ENCODE measurements at regions of chr3 and their contacts with region 1.

Region 1: DNA sequence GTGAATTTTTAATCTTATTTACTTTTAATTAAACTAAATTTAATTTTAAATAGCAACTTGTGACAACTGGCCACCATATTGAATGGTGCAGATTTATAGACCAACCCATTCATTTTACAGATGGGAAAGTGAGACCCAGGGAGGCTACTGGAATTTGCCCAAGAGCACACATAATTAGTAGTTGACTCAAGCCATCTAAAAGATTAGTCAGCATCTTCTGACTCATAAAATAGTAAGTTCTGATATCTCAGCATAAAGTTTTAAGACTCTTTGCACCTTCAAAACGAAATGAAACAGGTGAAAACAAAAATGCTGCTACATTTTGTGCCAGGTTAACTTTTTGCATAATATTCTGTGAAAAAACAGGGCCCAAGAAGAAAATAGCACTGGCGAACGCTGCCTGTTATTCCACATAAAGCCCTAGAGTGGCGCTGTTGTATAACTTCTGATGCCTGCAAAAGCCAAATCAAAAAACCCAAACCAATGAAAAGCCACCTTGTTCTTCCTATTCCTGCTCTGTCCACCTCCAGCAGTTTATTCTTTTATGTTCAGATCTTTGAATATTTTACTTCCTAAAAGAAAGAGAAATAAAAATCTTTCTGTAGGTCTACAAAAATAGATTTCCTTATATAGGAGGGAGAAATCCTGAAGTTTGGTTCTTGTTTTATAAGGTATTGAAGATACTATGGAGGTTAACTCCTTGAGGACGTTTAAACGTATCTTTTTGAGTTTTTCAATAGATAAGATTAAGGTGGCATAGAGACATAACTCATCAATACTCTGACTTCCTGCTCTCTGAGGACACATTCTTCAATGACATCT is 62.8 kb downstream of the OTOL1 start:
- DNase-seq: peak; percentile 50
- H3K4me3 Mint-ChIP-seq: no peak overlapping the region
- H3K27ac Mint-ChIP-seq: no peak overlapping the region
- H3K4me1 Mint-ChIP-seq: peaks cover 9% of the 10 kb centered on the region
- H3K27me3 Mint-ChIP-seq: no peaks in the 10 kb centered on the region
- CTCF ChIP-seq: peak; percentile 95

Region 2: DNA sequence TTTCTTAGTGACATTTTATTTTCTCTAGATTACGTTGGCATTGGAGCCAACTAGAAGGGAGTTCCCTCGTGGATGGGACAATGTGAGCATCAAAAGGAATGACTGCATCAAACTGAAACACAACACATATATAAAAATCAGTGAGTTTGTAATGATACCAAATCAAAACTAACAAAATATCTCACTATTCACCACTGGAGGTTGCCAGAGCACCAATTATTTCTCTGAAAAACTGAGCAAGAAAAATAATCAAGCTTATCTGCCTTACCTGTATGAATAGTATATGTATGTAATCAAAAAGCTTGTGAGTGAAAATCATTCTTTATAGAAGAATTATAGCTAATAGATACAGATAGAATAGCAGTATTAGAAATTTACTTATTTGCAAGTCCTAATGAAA is 109.6 kb before region 1 on chr3:
- CTCF ChIA-PET with region 1: no interaction called
- intact Hi-C with region 1: loop called (anchors 5 kb)
- DNase-seq: no peak
- H3K4me3 Mint-ChIP-seq: no peak overlapping the region
- H3K27ac Mint-ChIP-seq: no peak overlapping the region
- H3K4me1 Mint-ChIP-seq: peaks cover 6% of the 10 kb centered on the region
- H3K27me3 Mint-ChIP-seq: no peaks in the 10 kb centered on the region
- CTCF ChIP-seq: peak; percentile 20

Region 3: GRCh38 chr3:161700998-161701397 is 141.6 kb after region 1 on chr3:
- CTCF ChIA-PET with region 1: interaction called, 6 read pairs
- intact Hi-C with region 1: loop called (anchors 1 kb)
- DNase-seq: peak; percentile 63
- H3K4me3 Mint-ChIP-seq: no peak overlapping the region
- H3K27ac Mint-ChIP-seq: no peak overlapping the region
- H3K4me1 Mint-ChIP-seq: peaks cover 6% of the 10 kb centered on the region
- H3K27me3 Mint-ChIP-seq: no peaks in the 10 kb centered on the region
- CTCF ChIP-seq: no peak

Region 4: DNA sequence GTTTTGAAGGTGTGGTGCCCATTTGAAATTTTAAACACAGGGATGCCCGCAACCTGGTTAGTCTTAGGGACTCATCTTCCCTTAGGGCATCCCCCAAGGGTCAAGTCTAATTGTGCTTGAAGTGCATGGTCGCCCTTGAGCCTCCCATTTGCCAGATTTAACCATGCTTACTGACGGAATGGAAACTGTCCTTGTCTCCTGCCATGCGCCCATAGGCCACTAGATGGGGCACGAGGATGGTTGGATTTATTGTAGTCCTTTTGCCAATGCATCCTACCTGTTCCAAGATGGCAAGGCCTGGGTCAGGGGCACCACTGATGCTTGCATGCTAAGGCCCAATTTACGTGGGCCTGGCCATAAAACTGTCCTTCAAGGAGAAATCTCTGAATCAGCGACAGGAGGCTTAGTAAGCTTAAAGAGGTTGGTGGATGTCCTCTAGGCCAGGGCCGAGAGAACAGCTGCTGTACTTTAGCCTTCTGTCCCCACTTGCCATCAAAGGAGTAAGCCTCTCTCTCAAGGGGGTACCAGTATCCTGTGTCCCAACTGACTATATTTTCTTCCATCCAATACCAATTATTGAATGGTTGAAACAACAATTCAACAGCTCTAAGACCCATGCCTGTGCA is 292.7 kb after region 1 on chr3:
- CTCF ChIA-PET with region 1: no interaction called
- intact Hi-C with region 1: loop called (anchors 1 kb)
- DNase-seq: peak; percentile 87
- H3K4me3 Mint-ChIP-seq: no peak overlapping the region
- H3K27ac Mint-ChIP-seq: no peak overlapping the region
- H3K4me1 Mint-ChIP-seq: peaks cover 21% of the 10 kb centered on the region
- H3K27me3 Mint-ChIP-seq: no peaks in the 10 kb centered on the region
- CTCF ChIP-seq: peak; percentile 100

Region 5: DNA sequence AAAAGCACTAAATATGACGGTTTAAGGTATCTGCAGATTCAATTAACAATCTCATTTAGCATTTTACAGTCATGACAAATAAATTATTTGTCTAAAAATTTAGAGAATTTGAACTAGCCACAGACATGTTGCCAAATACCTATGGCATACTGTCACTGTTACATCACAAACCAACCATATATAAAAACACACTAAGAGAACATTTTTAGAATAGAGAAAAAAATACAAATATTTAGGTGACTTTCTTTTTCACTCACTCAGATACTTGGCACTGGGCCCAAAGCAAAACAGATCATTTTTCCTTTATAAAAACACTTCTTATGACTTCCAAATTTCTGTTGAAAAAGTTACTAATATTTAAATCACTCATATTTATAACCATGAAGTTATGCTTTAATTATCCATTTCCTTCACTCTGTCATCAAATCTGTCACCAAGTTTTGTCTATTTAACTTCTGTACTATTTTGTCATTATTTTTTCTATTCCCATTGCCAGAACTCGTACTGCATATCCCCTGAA is 581.9 kb after region 1 on chr3:
- CTCF ChIA-PET with region 1: no interaction called
- intact Hi-C with region 1: loop called (anchors 10 kb)
- DNase-seq: peak; percentile 19
- H3K4me3 Mint-ChIP-seq: no peak overlapping the region
- H3K27ac Mint-ChIP-seq: no peak overlapping the region
- H3K4me1 Mint-ChIP-seq: peaks cover 10% of the 10 kb centered on the region
- H3K27me3 Mint-ChIP-seq: no peaks in the 10 kb centered on the region
- CTCF ChIP-seq: no peak

Region 6: GRCh38 chr3:162400697-162401096 is 841.3 kb after region 1 on chr3:
- CTCF ChIA-PET with region 1: no interaction called
- intact Hi-C with region 1: no loop called
- DNase-seq: no peak
- H3K4me3 Mint-ChIP-seq: no peak overlapping the region
- H3K27ac Mint-ChIP-seq: no peak overlapping the region
- H3K4me1 Mint-ChIP-seq: no peaks in the 10 kb centered on the region
- H3K27me3 Mint-ChIP-seq: no peaks in the 10 kb centered on the region
- CTCF ChIP-seq: peak; percentile 19

Region 7: DNA sequence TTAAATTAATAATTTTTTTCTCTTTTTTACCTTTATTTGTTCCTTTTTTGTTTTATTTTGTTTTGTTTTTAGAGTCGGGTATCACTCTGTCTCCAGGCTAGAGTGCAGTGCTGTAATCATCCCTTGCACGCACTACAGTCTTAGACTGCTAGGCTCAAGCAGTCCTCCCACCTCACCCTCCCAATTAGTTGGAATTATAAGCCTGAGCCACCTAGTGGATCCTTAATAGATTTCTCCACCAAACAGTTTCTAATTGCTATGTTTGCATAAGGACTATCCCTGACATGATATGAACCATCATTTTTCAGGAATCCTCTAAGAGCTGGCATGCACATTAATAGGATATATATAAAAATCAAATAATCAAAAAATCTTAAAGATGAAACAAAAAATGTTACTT is 930.5 kb after region 1 on chr3:
- CTCF ChIA-PET with region 1: no interaction called
- intact Hi-C with region 1: loop called (anchors 5 kb)
- DNase-seq: peak; percentile 22
- H3K4me3 Mint-ChIP-seq: no peak overlapping the region
- H3K27ac Mint-ChIP-seq: no peak overlapping the region
- H3K4me1 Mint-ChIP-seq: no peaks in the 10 kb centered on the region
- H3K27me3 Mint-ChIP-seq: no peaks in the 10 kb centered on the region
- CTCF ChIP-seq: peak; percentile 63

Region 8: GRCh38 chr3:162973518-162973917 is 1414.1 kb after region 1 on chr3:
- CTCF ChIA-PET with region 1: no interaction called
- intact Hi-C with region 1: no loop called
- DNase-seq: no peak
- H3K4me3 Mint-ChIP-seq: no peak overlapping the region
- H3K27ac Mint-ChIP-seq: no peak overlapping the region
- H3K4me1 Mint-ChIP-seq: peaks cover 8% of the 10 kb centered on the region
- H3K27me3 Mint-ChIP-seq: no peaks in the 10 kb centered on the region
- CTCF ChIP-seq: no peak

Region 9: DNA sequence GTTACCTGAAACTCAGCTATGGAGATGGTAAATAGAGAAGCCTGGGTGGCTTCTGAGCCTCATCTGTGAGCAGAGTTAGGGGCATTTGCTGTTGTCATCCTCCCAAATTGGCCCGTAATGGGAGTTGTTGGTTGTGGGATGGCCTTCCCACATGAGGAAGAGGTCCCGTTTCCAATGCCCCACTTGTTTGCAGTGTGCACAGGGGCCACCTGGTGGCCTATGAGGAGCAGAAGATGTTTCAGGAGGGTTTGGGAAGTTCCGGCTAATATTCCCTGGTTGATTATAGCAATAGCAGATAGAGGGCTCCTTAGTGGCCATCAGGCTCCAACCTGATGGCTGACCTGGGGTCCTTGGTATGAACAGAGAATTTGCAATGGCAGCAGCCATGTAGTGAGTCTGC is 1483.7 kb after region 1 on chr3:
- CTCF ChIA-PET with region 1: no interaction called
- intact Hi-C with region 1: loop called (anchors 5 kb)
- DNase-seq: peak; percentile 23
- H3K4me3 Mint-ChIP-seq: no peak overlapping the region
- H3K27ac Mint-ChIP-seq: no peak overlapping the region
- H3K4me1 Mint-ChIP-seq: no peaks in the 10 kb centered on the region
- H3K27me3 Mint-ChIP-seq: no peaks in the 10 kb centered on the region
- CTCF ChIP-seq: peak; percentile 60

Measured in Calu3 (cell line).